Astrocyte of the cerebellum (primary cell): ENCODE measurements at regions of chr11 and their contacts with region 1.

Region 1: DNA sequence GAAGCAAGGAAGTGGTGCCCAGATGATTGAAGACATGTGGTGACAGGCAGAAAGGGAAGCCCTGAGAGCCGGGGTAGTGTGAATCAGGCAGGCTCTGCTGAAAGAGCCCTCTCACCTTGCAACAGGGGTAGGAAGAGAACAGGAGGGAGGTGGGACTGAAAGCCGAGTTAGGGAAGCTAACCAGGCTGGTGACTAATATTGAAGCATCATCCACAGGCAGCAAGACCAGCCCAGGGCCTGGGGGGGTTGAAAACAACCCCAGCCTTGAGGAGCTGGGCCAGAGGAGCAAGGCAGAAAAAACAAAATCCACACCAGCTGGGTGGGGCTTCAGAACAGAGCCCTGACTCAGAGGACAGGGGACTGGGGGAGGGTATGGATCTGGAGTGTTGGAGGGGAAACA is 35.0 kb upstream of the CRTAM start:
- DNase-seq: no peak
- H3K4me3 ChIP-seq: no peak overlapping the region
- CTCF ChIP-seq: no peak

Region 2: GRCh38 chr11:122837528-122838346 is 34.4 kb after region 1 on chr11:
- in situ Hi-C with region 1: loop called (anchors 5 kb)
- DNase-seq: no peak
- H3K4me3 ChIP-seq: no peak overlapping the region
- CTCF ChIP-seq: no peak

Region 3: DNA sequence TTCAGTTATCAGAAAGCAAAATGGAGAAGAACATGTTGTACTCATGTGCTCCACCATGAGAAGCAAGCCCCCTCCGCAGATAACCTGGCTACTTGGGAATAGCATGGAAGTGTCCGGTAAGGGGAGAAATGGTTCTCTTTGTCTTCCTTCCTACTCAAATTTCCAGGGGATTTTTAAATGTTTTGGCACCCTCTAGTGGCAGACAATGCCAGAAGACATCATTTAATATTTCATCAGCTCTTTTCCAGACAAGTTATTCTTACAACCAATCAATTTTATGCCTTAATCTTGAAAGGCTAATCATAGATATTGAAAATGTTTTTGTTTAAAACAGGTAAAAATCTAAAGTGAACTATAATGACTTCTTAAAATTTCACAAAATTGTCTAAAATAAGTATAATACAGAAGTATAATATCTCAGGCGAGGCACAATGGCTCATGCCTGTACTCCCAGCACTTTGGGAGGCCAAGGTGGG is 50.7 kb after region 1 on chr11:
- in situ Hi-C with region 1: no loop called
- DNase-seq: peak; percentile 76
- H3K4me3 ChIP-seq: no peak overlapping the region
- CTCF ChIP-seq: peak; percentile 58